ENCODE measurements at regions of chr15 and their contacts with region 1.

Region 1: GRCh38 chr15:20356444-20356910 is 185.1 kb downstream of the GOLGA6L6 start:
- DNase-seq: peak in 41 of 42 donors; percentile 76 to 99 (median 89)

Region 2: GRCh38 chr15:20294651-20295237 is 61.7 kb before region 1 on chr15:
- intact Hi-C with region 1: no loop called
- DNase-seq: peak in 16 of 42 donors; percentile 1 to 56 (median 20)

Region 3: DNA sequence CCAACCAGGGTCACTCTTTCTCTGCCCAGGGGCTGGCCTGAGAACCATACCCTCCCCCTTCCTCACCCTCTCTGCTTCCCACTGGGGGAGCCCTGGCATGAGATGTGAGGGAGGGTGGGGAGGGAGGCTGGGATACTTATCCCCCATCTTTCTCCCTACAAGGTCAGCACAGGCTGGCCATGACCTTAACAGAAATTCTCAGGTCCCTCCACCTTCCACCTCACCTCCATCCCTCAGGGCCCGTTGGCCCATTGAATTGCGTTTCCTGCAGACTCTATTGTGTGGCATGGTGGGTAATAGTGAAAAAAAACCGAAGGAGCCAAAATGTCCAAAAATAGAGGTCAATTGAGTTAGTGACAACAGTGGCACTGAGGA is 1883.3 kb after region 1 on chr15:
- intact Hi-C with region 1: loop called (anchors 10 kb)
- DNase-seq: no peak

Measured in head of caudate nucleus (tissue), 42 donors.